ENCODE measurements at regions of chr7 and their contacts with region 1.

Region 1: DNA sequence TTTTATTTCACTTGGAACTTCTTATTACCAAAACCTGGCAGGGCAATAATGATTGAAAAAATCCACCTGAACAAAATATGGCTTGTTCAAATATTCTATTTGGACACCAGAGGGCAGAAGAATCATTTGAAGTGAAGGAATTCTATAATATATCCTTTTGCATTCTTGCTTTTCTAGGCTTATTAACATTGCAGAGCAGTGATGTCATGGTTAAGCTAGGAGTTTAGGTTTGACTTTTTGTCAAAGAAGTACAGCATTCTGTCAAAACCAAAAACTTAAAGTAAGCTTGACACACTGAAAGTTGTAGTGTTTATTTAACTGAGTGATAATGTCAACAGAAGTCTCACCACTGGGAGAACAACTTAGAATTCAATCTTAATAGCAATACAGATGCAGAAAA is 156.0 kb downstream of the SEMA3D start:
- DNase-seq: peak; percentile 29
- ATAC-seq: no peak
- H3K4me3 ChIP-seq: no peak overlapping the region
- H3K4me3 Mint-ChIP-seq: no peak overlapping the region
- H3K27ac ChIP-seq: no peak overlapping the region
- H3K27ac Mint-ChIP-seq: no peak overlapping the region
- H3K4me1 ChIP-seq: no peaks in the 10 kb centered on the region
- H3K4me1 Mint-ChIP-seq: no peaks in the 10 kb centered on the region
- H3K27me3 ChIP-seq: no peaks in the 10 kb centered on the region
- H3K27me3 Mint-ChIP-seq: no peaks in the 10 kb centered on the region
- CTCF ChIP-seq: peak; percentile 72

Region 2: GRCh38 chr7:84811362-84811761 is 219.5 kb before region 1 on chr7:
- CTCF ChIA-PET with region 1: no interaction called
- POLR2A ChIA-PET with region 1: no interaction called
- intact Hi-C with region 1: no loop called
- DNase-seq: no peak
- ATAC-seq: no peak
- H3K4me3 ChIP-seq: no peak overlapping the region
- H3K4me3 Mint-ChIP-seq: no peak overlapping the region
- H3K27ac ChIP-seq: no peak overlapping the region
- H3K27ac Mint-ChIP-seq: no peak overlapping the region
- H3K4me1 ChIP-seq: no peaks in the 10 kb centered on the region
- H3K4me1 Mint-ChIP-seq: no peaks in the 10 kb centered on the region
- H3K27me3 ChIP-seq: no peaks in the 10 kb centered on the region
- H3K27me3 Mint-ChIP-seq: no peaks in the 10 kb centered on the region
- CTCF ChIP-seq: no peak

Region 3: DNA sequence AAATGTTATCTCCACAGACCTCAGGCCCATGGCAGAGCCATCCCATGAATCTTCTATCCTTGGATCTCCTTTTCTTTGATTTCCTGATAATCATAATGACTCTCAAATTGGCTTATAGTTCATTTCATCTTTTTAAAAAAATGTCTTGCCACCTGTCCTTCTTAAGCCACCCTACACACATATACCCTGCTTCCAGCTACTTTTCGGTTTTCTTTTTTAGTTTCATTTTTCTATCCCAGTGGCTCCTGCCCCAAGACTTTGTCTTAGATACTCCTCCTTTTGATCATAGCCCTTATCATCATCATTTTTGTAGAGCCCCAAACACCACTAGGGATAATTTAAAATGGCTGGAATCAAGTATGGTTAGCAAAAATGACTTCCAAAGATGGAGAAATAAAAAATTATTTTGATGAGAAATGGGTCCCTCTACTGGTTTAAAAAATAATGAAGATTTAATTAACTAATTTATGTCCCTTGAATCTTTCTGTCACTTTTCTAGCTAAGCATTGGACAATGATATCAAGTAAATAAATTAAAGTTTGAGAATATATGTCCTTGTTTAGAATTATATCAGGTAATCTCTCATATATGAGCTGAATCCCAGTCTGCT is 433.3 kb after region 1 on chr7:
- CTCF ChIA-PET with region 1: interaction called, 15 read pairs
- POLR2A ChIA-PET with region 1: no interaction called
- intact Hi-C with region 1: no loop called
- DNase-seq: peak; percentile 15
- ATAC-seq: no peak
- H3K4me3 ChIP-seq: peak overlapping the region in 1 of 5 experiments; percentile 8
- H3K4me3 Mint-ChIP-seq: no peak overlapping the region
- H3K27ac ChIP-seq: no peak overlapping the region
- H3K27ac Mint-ChIP-seq: no peak overlapping the region
- H3K4me1 ChIP-seq: no peaks in the 10 kb centered on the region
- H3K4me1 Mint-ChIP-seq: no peaks in the 10 kb centered on the region
- H3K27me3 ChIP-seq: no peaks in the 10 kb centered on the region
- H3K27me3 Mint-ChIP-seq: no peaks in the 10 kb centered on the region
- CTCF ChIP-seq: peak; percentile 65

Region 4: DNA sequence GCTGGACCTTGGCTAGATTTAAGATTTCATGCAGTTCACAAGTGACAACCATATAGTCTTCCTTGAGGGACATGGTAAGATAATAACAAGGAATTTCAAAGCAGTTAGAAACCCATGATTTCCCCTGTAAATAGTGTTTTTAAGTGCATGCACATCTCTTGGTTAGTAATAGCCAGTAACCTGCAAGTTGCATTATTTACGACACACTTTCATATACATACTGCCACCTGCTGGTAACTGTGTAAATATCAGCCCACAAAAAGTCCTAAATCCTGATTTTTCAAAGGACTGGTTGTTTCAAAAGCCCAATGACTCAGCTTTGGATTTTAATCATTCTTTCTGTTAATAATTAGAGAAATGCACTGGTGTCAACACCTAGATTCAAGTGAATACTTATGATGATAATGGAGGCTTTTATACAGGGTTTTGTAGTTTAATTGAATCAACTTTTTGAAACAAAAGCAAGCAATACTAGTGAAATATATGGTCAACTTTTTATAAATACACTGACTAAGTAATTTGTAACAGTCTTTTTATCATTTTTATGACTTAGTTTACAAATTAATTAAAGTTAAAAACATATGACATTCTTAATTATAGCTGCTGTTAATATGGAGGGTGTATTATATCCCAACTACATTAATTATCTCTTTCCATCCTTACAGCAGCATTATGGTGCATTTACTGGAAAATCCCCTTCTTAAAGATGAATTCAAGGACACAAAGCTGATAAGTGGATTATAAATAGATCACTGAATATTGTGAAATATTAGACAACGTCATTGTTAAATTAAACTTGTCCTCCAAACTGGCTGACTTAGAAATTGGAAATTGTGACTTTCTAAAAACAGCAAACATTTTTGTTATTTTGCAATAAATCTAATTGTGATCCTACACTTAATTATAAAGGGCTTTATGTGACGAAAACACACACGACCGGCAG is 523.6 kb after region 1 on chr7:
- CTCF ChIA-PET with region 1: interaction called, 33 read pairs
- POLR2A ChIA-PET with region 1: no interaction called
- intact Hi-C with region 1: loop called (anchors 1 kb)
- DNase-seq: peak; percentile 58
- ATAC-seq: peak; percentile 43
- H3K4me3 ChIP-seq: no peak overlapping the region
- H3K4me3 Mint-ChIP-seq: no peak overlapping the region
- H3K27ac ChIP-seq: no peak overlapping the region
- H3K27ac Mint-ChIP-seq: no peak overlapping the region
- H3K4me1 ChIP-seq: no peaks in the 10 kb centered on the region
- H3K4me1 Mint-ChIP-seq: no peaks in the 10 kb centered on the region
- H3K27me3 ChIP-seq: no peaks in the 10 kb centered on the region
- H3K27me3 Mint-ChIP-seq: no peaks in the 10 kb centered on the region
- CTCF ChIP-seq: peak; percentile 84

Region 5: DNA sequence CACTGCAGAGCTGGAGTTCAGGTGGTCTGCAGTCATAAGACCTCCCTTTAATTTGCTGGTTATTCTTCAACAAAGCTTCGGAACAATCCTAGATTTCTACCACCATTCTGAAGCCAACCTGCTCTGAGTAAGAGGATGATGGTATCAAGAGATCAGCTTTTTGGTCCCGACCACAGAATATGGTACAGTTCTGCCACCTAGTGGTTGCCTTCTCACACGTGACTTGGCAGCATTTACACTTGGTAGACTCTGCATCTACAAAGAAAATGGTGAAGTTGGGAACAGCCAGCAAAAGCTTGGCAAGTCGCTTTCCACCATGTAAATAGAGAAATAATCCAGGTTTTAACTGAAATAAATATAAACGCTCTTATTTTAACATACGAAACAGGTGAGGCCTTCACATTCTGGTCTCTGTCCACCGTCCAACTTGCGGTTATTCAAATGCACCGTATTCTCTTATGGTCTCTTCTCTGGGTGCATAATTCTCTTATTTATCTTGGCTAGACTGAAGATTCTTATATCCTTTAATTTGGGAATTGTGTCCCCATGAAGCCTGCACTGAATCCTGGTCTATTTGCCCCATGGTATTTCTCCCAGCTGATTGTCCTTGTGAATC is 1438.9 kb after region 1 on chr7:
- CTCF ChIA-PET with region 1: interaction called, 3 read pairs
- POLR2A ChIA-PET with region 1: no interaction called
- intact Hi-C with region 1: loop called (anchors 5 kb)
- DNase-seq: peak; percentile 45
- ATAC-seq: peak; percentile 39
- H3K4me3 ChIP-seq: no peak overlapping the region
- H3K4me3 Mint-ChIP-seq: no peak overlapping the region
- H3K27ac ChIP-seq: no peak overlapping the region
- H3K27ac Mint-ChIP-seq: no peak overlapping the region
- H3K4me1 ChIP-seq: no peaks in the 10 kb centered on the region
- H3K4me1 Mint-ChIP-seq: no peaks in the 10 kb centered on the region
- H3K27me3 ChIP-seq: no peaks in the 10 kb centered on the region
- H3K27me3 Mint-ChIP-seq: no peaks in the 10 kb centered on the region
- CTCF ChIP-seq: peak; percentile 61